PC-9 (cell line): ENCODE measurements at regions of chr5 and their contacts with region 1.

Region 1: DNA sequence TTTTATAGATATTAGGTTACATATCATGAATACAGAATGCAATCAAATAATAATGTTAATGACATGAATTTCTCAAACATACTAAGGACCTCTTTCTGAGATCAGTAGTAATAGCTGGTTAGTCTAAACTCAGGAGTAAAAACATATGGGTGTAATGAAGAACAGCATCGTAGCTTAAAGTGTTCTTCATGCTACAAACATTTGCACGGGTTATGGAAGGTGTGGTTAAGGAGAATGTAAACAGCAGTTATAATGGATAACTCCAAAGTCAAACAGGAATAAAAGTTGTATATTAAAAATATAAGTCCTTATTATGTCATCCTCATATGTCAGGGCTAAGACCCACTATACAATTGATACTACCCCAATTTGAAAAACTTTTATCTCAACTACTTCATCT is 112.5 kb downstream of the RICTOR start:
- DNase-seq: no peak
- H3K4me3 ChIP-seq: no peak overlapping the region
- H3K27ac ChIP-seq: no peak overlapping the region
- H3K4me1 ChIP-seq: no peaks in the 10 kb centered on the region
- H3K27me3 ChIP-seq: no peaks in the 10 kb centered on the region
- CTCF ChIP-seq: no peak

Region 2: GRCh38 chr5:38039826-38040225 is 921.9 kb before region 1 on chr5:
- CTCF ChIA-PET with region 1: no interaction called
- POLR2A ChIA-PET with region 1: no interaction called
- intact Hi-C with region 1: no loop called
- DNase-seq: no peak
- H3K4me3 ChIP-seq: no peak overlapping the region
- H3K27ac ChIP-seq: no peak overlapping the region
- H3K4me1 ChIP-seq: no peaks in the 10 kb centered on the region
- H3K27me3 ChIP-seq: peaks cover 25% of the 10 kb centered on the region; the same call in 1 of the 2 replicates
- CTCF ChIP-seq: no peak

Region 3: GRCh38 chr5:38940230-38940858 is 21.3 kb before region 1 on chr5:
- CTCF ChIA-PET with region 1: no interaction called
- POLR2A ChIA-PET with region 1: no interaction called
- intact Hi-C with region 1: loop called (anchors 2 kb)
- DNase-seq: no peak
- H3K4me3 ChIP-seq: no peak overlapping the region
- H3K27ac ChIP-seq: no peak overlapping the region
- H3K4me1 ChIP-seq: no peaks in the 10 kb centered on the region
- H3K27me3 ChIP-seq: no peaks in the 10 kb centered on the region
- CTCF ChIP-seq: no peak

Region 4: DNA sequence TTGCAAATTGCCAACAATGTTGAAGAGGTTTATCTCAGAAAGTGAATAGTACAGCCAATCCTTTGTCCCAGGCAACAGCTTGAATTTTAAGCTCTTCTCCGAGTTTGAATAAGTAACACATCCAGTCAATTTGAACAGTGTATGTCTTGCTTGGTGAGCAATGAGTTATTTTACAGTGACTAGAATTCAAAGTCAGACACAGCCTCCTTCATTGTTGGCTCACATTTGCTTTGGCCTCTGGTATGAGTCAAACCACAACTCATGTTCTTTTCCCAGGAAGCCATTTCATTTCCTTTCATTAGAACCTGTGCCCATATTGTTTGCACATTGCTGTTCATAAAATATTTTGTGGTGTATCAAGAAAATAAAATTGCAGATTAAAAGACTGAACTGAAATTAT is 1085.1 kb after region 1 on chr5:
- CTCF ChIA-PET with region 1: no interaction called
- POLR2A ChIA-PET with region 1: no interaction called
- intact Hi-C with region 1: no loop called
- DNase-seq: no peak
- H3K4me3 ChIP-seq: no peak overlapping the region
- H3K27ac ChIP-seq: no peak overlapping the region
- H3K4me1 ChIP-seq: no peaks in the 10 kb centered on the region
- H3K27me3 ChIP-seq: no peaks in the 10 kb centered on the region
- CTCF ChIP-seq: no peak